ENCODE measurements at regions of chr15 and their contacts with region 1.

Region 1: DNA sequence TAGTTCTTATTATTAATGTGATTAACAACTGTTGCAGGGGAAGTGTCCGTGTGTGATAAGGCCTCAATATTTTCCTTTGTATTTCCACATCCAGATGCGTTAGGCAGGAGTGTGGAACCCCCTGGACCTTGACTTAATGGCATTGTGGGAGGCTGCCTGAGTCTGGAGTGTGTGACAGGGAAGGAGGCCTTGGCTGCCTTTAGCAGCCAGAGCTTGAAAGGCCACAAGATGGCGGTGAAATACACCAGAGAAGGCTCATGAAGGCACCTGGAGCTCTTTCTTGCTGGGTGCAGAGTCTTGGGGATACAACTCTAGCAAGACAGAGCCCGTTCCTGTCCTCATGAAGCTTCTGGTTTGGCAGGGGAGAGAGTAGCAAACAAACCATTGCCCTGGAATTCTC is 36.9 kb downstream of the POLR2M start:
- DNase-seq: peak in 1 of 2 experiments; percentile 15
- H3K4me3 ChIP-seq: no peak overlapping the region
- H3K4me1 ChIP-seq: peaks cover 8% of the 10 kb centered on the region
- H3K27me3 ChIP-seq: peaks cover 12% of the 10 kb centered on the region

Region 2: DNA sequence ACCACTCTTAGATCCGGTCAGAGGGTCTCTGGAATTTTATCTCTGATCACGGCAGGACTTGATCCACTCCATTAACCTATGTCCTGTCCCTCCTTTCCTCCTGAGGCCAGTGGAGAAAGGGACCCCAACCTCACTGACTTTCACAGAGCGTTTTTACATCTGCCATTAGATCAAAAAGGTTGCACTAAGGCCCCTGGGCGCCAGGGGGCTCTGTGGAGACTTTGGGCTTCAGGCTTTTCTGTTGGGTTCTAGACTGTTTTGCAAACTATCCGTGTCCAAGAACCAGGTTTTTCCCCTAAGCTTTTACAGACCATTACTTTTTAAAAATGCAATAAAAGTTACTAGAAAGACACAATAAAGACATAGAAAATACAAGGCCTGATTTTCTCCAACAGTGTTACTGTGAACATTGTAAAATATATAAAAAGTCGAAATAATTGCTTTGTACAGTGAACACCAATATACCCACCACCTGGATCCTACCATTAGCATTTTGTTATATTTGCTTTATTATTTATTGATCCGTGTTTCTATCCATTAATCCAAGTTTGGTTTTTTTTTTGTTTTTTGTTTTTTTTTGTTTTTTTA is 122.8 kb after region 1 on chr15:
- in situ Hi-C with region 1: loop called (anchors 10 kb)
- DNase-seq: peak; percentile 34 to 79
- H3K4me3 ChIP-seq: no peak overlapping the region
- H3K4me1 ChIP-seq: no peaks in the 10 kb centered on the region
- H3K27me3 ChIP-seq: peaks cover 2% of the 10 kb centered on the region; the same call in 1 of the 2 replicates

Measured in HAP-1 (cell line).